ENCODE measurements at regions of chr13 and their contacts with region 1.

Region 1: GRCh38 chr13:29850224-29850898 is at the start of gene UBL3:
- DNase-seq: peak; percentile 97
- ATAC-seq: peak; percentile 92
- H3K4me3 ChIP-seq: peak within 1 kb of the TSS; percentile 78 to 99 (median 87)
- H3K4me3 Mint-ChIP-seq: peak within 1 kb of the TSS; percentile 91
- H3K27ac ChIP-seq: peak within 1 kb of the TSS; percentile 93 to 94
- H3K27ac Mint-ChIP-seq: peak within 1 kb of the TSS; percentile 99
- H3K4me1 ChIP-seq: peaks cover 17 to 20% of the 10 kb centered on the region in 2 donors
- H3K4me1 Mint-ChIP-seq: peaks cover 28% of the 10 kb centered on the region
- H3K27me3 ChIP-seq: no peaks in the 10 kb centered on the region
- H3K27me3 Mint-ChIP-seq: no peaks in the 10 kb centered on the region
- CTCF ChIP-seq: no peak
- total RNA-seq, gene UBL3: 26.4 and 27.9 TPM in 2 replicates

Region 2: GRCh38 chr13:29817604-29818378 is 32.6 kb before region 1 on chr13:
- CTCF ChIA-PET with region 1: interaction called, 5 read pairs
- POLR2A ChIA-PET with region 1: no interaction called
- intact Hi-C with region 1: loop called (anchors 2 kb)
- DNase-seq: peak; percentile 60
- ATAC-seq: peak; percentile 85
- H3K4me3 ChIP-seq: peak overlapping the region in 1 of 5 experiments; percentile 48
- H3K4me3 Mint-ChIP-seq: peak overlapping the region; percentile 77
- H3K27ac ChIP-seq: peak overlapping the region; percentile 59 to 65
- H3K27ac Mint-ChIP-seq: peak overlapping the region; percentile 51
- H3K4me1 ChIP-seq: peaks cover 20 to 34% of the 10 kb centered on the region in 2 donors
- H3K4me1 Mint-ChIP-seq: peaks cover 63% of the 10 kb centered on the region
- H3K27me3 ChIP-seq: no peaks in the 10 kb centered on the region
- H3K27me3 Mint-ChIP-seq: no peaks in the 10 kb centered on the region
- CTCF ChIP-seq: no peak

Measured in B cell (primary cell).